ENCODE measurements at regions of chr16 and their contacts with region 1.

Region 1: GRCh38 chr16:10964039-10964890 is 19.9 kb downstream of the CLEC16A start:
- ATAC-seq: peak; percentile 92 to 99 (median 96)
- H3K4me3 ChIP-seq: no peak overlapping the region
- H3K27ac ChIP-seq: no peak overlapping the region
- H3K4me1 ChIP-seq: peaks cover 3 to 4% of the 10 kb centered on the region in 2 donors

Region 2: DNA sequence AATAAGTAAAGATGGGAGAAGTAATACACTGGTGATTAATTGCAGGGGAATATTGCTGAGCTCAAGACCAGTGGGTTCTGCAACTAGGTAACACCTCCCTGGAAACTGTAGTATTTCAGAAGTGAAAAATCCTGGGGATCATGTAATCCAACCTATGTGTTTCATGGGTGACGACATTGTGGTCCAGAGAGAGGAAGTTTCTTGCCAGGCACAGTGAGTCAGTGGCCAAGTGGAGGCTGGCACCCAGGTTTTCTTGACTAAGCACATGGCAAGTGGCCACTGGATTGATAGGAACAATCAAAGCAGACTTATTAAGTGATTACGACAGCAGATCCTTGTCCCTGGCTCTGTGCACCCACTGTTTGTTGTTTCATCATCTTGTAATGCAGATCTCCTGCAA is 101.8 kb before region 1 on chr16:
- in situ Hi-C with region 1: no loop called
- ATAC-seq: no peak
- H3K4me3 ChIP-seq: no peak overlapping the region
- H3K27ac ChIP-seq: no peak overlapping the region
- H3K4me1 ChIP-seq: no peaks in the 10 kb centered on the region

Region 3: GRCh38 chr16:11105038-11105903 is 141.0 kb after region 1 on chr16:
- in situ Hi-C with region 1: loop called in 1 of 9 experiments (anchors 25 kb)
- ATAC-seq: peak; percentile 46 to 88 (median 70)
- H3K4me3 ChIP-seq: no peak overlapping the region
- H3K27ac ChIP-seq: no peak overlapping the region
- H3K4me1 ChIP-seq: peaks cover 7 to 12% of the 10 kb centered on the region in 2 donors

Region 4: GRCh38 chr16:11345040-11345862 is 381.0 kb after region 1 on chr16 and contains the start of gene RMI2:
- in situ Hi-C with region 1: loop called in 7 of 9 experiments (anchors 25 kb)
- ATAC-seq: peak; percentile 96 to 99 (median 98)
- H3K4me3 ChIP-seq: peak within 1 kb of the TSS; percentile 47 to 87 (median 73)
- H3K27ac ChIP-seq: no peak within 1 kb of the TSS
- H3K4me1 ChIP-seq: peaks cover 0 to 11% of the 10 kb centered on the region in 2 donors
- total RNA-seq, gene RMI2: 1.6 to 22.7 (median 5.2) TPM

Region 5: DNA sequence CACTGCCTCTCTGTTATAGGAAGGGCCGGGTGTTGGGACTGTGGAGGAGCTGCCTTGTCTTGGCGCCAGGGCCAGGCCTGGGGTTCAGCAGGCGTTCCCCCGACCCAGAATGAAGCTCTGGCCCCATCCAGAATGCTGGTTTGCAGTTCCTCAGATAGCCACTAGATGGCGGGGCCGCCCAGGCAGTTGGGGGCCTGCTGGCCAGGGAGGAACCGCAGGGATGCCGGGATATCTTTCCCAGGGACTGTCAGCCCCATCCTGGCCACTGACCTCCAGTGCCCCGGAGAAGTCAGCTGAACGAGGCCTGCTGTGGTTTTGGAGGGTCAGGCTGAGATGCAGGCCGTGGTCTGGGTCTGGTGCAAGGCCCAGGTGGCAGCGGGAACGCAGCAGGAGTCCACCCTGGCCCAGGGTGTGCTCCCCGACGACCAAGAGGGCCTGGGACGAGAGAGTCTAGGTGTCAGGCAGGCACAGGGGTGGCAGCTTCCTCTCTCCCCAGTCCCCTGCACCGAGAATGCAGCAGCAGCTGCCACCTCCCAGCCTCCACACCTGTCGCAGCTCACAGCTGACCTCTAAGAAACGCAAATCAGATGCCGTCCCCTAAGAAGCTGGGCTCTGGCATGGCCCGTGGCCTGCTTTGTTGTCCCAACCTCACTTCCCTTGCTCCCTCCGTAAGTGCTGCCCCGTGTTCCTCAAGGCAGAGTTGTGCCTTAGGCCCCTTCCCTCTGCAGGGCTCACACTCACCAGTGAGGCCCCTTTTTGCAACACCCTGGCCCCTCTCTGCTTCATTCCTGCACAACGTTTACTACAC is 432.2 kb after region 1 on chr16:
- in situ Hi-C with region 1: loop called in 2 of 9 experiments (anchors 25 kb)
- ATAC-seq: peak; percentile 90 to 97 (median 92)
- H3K4me3 ChIP-seq: no peak overlapping the region
- H3K27ac ChIP-seq: no peak overlapping the region
- H3K4me1 ChIP-seq: peaks cover 6 to 7% of the 10 kb centered on the region in 2 donors

Region 6: DNA sequence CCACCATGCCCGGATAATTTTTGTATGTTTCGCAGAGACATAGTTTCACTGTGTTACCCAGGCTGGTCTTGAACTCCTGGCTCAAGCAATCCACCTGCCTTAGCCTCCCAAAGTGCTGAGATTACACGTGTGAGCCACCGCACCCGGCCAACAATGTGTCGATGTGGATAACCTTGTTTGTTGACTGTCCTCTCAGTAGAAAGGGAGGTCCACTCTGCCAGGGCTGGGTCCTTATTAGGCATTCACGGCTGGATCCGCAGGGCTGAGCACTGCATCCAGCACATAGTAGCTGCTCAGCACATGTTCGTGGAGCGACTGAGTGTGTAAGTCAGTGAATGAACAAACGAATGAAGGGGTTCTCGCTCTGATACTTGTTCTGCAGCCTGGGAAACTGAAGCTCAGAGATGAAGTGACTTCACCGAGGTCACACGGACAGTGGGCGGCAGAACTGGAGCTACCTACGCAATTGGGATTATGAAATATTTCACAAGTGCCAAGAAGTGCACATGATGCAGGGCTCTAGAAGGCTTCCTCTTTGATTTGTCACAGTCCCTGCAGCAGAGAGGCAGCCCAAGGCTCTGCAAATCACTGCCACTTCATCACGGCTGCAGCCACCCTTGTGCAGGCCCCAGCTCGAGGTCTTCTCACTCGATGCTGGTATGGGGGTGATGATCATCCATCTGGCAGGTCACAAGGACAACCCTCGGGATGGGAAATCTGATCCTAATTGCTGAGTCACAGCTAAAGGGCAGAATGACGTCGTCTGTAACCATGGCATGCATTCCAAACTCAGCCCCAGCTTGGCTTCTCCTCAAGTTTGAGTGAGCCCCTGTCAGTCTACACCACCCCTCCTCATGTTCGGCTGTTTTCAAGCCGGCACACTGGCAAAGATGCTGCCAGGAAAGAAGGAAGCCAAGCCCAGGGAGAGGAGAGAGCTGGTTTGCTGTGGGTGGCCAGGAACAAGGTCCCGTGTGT is 675.9 kb after region 1 on chr16:
- in situ Hi-C with region 1: loop called in 1 of 9 experiments (anchors 25 kb)
- ATAC-seq: peak; percentile 80 to 97 (median 94)
- H3K4me3 ChIP-seq: no peak overlapping the region
- H3K27ac ChIP-seq: peak overlapping the region in 1 of 2 donors; percentile 41
- H3K4me1 ChIP-seq: peaks cover 4 to 7% of the 10 kb centered on the region in 2 donors

Region 7: GRCh38 chr16:11799509-11800381 is 835.5 kb after region 1 on chr16:
- in situ Hi-C with region 1: loop called in 1 of 9 experiments (anchors 25 kb)
- ATAC-seq: no peak
- H3K4me3 ChIP-seq: no peak overlapping the region
- H3K27ac ChIP-seq: no peak overlapping the region
- H3K4me1 ChIP-seq: peaks cover 19 to 20% of the 10 kb centered on the region in 2 donors

Measured in motor neuron (in vitro differentiated cells).